Tibial artery (tissue), 4 donors: ENCODE measurements at regions of chr16 and their contacts with region 1.

Region 1: GRCh38 chr16:57475711-57476339 is 10.5 kb downstream of the DOK4 start:
- DNase-seq: no peak
- H3K4me3 ChIP-seq: no peak overlapping the region
- H3K27ac ChIP-seq: peak overlapping the region; percentile 35 to 77
- H3K4me1 ChIP-seq: peaks cover 12 to 51% (median 44%) of the 10 kb centered on the region in 4 donors
- H3K27me3 ChIP-seq: no peaks in the 10 kb centered on the region
- CTCF ChIP-seq: peak in 1 of 2 experiments; percentile 33

Region 2: GRCh38 chr16:57394444-57394843 is 81.4 kb before region 1 on chr16:
- intact Hi-C with region 1: no loop called
- DNase-seq: no peak
- H3K4me3 ChIP-seq: no peak overlapping the region
- H3K27ac ChIP-seq: no peak overlapping the region
- H3K4me1 ChIP-seq: peaks cover 0 to 17% (median 3%) of the 10 kb centered on the region in 4 donors
- H3K27me3 ChIP-seq: no peaks in the 10 kb centered on the region
- CTCF ChIP-seq: no peak

Region 3: DNA sequence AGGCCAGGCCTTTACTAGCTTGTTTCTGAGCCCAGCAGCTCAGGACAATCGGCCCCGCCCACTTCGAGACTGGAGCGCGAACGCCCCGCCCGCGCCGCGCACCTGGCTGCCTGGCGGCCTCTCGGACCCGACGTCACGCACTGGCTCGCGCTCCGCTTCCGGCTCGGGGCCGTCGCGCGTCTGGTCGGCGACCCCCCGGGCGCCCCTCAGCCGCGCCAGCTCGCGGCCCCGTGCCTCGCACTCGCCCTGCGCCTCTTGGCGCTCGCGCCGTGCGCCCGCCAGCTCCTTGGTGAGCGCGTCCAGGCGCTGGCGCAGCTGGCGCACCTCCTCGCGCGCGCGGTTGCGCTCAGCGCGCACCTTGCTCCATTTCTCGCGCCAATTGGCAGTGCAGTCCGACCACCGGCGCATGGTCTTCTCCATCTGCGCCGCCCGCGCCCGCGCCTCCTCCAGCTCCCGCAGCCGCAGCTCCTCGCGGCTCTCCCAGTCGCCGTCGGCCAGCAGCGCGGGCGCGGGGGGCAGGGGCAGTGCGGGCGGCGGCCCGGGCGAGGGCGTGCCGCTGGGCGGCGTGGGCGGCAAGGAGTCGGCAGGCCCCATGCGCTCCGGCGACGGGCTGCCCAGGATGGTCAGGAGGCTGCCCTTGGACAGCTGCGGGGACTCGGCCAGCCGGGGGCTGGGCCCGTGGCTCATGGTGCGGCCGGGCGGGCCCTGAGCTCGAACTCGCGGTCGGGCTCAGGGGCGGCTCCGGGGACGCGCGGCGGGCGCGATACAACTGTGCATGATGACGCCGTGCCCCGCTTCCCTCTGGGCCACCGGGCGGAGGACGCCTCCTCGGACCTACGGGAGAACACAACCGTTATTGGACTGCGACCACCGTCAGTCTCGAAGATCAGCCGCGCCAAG is 52.9 kb after region 1 on chr16:
- intact Hi-C with region 1: loop called (anchors 5 kb)
- DNase-seq: peak in 1 of 2 donors; percentile 57
- H3K4me3 ChIP-seq: no peak overlapping the region
- H3K27ac ChIP-seq: no peak overlapping the region
- H3K4me1 ChIP-seq: peaks cover 0 to 42% (median 30%) of the 10 kb centered on the region in 4 donors
- H3K27me3 ChIP-seq: no peaks in the 10 kb centered on the region
- CTCF ChIP-seq: no peak